HEK293 (cell line): ENCODE measurements at regions of chr5 and their contacts with region 1.

Region 1: DNA sequence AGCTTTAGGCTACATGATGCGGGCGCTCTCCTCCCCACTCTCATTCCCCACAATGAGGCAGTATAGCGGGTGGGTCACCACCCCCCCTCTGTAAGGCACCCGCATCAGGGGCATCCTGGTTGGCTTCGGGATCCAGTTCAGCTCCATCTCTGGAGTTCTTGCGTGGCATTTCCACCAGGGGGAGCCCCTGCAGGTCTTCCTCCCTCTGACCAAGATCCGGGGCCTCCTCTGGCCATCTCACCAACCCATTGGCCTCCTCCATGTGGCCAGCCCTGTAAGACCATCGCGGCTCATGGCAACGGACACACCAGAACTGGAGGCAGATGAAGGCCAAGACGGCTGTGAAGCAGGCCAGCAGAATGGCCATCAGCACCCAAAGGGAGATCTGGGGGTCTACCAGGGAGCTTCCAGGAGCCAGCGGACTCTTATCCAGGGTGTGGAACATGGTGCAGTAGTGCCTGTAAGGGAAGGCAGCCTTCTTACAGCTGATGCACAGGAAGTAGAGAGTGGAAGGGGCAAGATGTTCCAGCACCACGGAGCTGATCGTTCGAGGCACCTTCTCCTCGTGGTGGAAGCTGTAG is 77.0 kb downstream of the CYFIP2 start:
- H3K4me3 ChIP-seq: no peak overlapping the region
- H3K27ac ChIP-seq: no peak overlapping the region
- H3K4me1 ChIP-seq: no peaks in the 10 kb centered on the region
- CTCF ChIP-seq: peak; percentile 39; the same call in 1 of the 2 replicates

Region 2: GRCh38 chr5:157328277-157328912 is 14.5 kb before region 1 on chr5:
- CTCF ChIA-PET with region 1: interaction called, 32 read pairs
- POLR2A ChIA-PET with region 1: no interaction called
- H3K4me3 ChIP-seq: no peak overlapping the region
- H3K27ac ChIP-seq: no peak overlapping the region
- H3K4me1 ChIP-seq: no peaks in the 10 kb centered on the region
- CTCF ChIP-seq: peak; percentile 79

Region 3: GRCh38 chr5:157354800-157355199 is 11.9 kb after region 1 on chr5:
- CTCF ChIA-PET with region 1: interaction called, 63 read pairs
- POLR2A ChIA-PET with region 1: no interaction called
- H3K4me3 ChIP-seq: no peak overlapping the region
- H3K27ac ChIP-seq: no peak overlapping the region
- H3K4me1 ChIP-seq: no peaks in the 10 kb centered on the region
- CTCF ChIP-seq: no peak

Region 4: GRCh38 chr5:157718519-157718918 is 375.6 kb after region 1 on chr5:
- CTCF ChIA-PET with region 1: interaction called, 15 read pairs
- POLR2A ChIA-PET with region 1: no interaction called
- H3K4me3 ChIP-seq: no peak overlapping the region
- H3K27ac ChIP-seq: no peak overlapping the region
- H3K4me1 ChIP-seq: no peaks in the 10 kb centered on the region
- CTCF ChIP-seq: 0 out of 2 replicates have a peak, but pooled peaks have one; percentile 17